HCT116 (cell line): ENCODE measurements at regions of chr17 and their contacts with region 1.

Region 1: GRCh38 chr17:72725433-72726068 is 366.9 kb downstream of the SLC39A11 start:
- DNase-seq: peak; percentile 66
- ATAC-seq: peak; percentile 83
- H3K4me3 ChIP-seq: no peak overlapping the region
- H3K27ac ChIP-seq: no peak overlapping the region
- H3K4me1 ChIP-seq: peaks cover 0 to 34% of the 10 kb centered on the region in 2 experiments; a peak in 1 of 4 replicates
- H3K27me3 ChIP-seq: no peaks in the 10 kb centered on the region
- CTCF ChIP-seq: peak; percentile 95 to 100 (median 98)
- POLR2A ChIP-seq: no peak
- RAD21 ChIP-seq: peak; percentile 98

Region 2: DNA sequence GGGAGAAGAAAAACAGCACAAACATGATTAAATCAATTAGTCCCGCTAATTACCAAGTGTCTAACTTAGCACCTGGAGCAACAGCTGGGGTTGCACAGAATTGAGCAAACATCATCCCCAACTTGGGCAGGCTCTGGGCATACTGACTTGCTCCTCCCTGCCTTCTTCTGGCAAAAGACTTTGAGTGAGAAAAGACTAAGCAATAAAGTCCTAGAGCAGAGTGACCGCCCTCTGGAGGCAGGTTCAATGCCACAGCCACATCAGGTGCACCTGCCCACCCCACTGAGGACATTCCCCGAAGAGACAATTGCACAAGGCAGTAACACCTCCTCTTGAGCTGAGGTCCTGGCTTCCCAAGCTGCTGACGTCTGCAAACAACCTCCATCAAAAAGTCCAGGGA is 246.4 kb before region 1 on chr17:
- CTCF ChIA-PET with region 1: no interaction called
- POLR2A ChIA-PET with region 1: no interaction called
- RAD21 ChIA-PET with region 1: no interaction called
- intact Hi-C with region 1: no loop called
- DNase-seq: no peak
- ATAC-seq: peak; percentile 77
- H3K4me3 ChIP-seq: no peak overlapping the region
- H3K27ac ChIP-seq: no peak overlapping the region
- H3K4me1 ChIP-seq: peaks cover 3 to 32% of the 10 kb centered on the region in 2 experiments; a peak in 3 of 4 replicates
- H3K27me3 ChIP-seq: no peaks in the 10 kb centered on the region
- CTCF ChIP-seq: peak; percentile 38 to 58 (median 47); a peak in 5 of 6 replicates
- POLR2A ChIP-seq: no peak
- RAD21 ChIP-seq: peak; percentile 69

Region 3: DNA sequence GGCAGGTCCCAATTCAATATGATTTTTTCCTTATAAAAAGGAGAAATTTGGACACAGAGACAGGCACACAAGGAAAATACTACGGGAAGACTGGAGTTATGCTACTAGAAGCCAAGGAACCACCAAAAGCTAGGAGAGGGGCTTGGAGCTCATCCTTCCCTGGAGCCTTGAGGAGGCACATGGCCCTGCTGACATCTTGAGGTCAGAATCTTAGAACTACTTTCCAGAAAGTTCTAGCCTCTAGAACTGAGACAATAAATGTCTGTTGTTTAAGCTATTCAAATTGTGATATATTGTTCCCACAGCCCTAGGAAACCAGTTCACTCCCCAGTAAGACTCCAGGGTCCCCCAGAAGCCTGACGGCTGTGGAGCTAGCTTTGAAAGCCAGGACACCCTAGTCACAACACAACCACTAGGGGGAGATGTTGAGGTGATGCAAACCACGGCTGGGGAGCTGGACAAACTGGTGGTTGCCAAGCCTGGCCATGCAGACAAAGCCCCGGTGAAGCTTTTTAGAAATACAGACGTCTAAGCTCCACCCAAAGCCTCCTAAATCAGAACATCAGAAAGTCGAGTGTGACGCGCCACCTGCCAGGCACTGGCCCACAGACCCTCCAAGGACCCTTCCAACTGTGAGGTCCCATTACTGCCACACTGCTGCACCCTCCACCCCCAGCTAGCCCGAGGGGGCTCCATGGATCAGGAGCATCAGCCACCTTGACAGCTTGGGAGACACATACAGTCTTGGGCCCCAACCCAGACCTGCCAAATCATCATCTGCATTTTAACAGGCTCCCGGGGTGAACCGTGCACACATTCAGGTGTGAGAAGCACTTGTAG is 260.6 kb after region 1 on chr17:
- CTCF ChIA-PET with region 1: interaction called, 59 read pairs
- POLR2A ChIA-PET with region 1: no interaction called
- RAD21 ChIA-PET with region 1: interaction called, 4 to 5 read pairs
- intact Hi-C with region 1: loop called (anchors 1 kb)
- DNase-seq: peak; percentile 70
- ATAC-seq: peak; percentile 74
- H3K4me3 ChIP-seq: no peak overlapping the region
- H3K27ac ChIP-seq: peak overlapping the region; percentile 77; the same call in 1 of the 2 replicates
- H3K4me1 ChIP-seq: peaks cover 31 to 38% of the 10 kb centered on the region in 2 experiments
- H3K27me3 ChIP-seq: no peaks in the 10 kb centered on the region
- CTCF ChIP-seq: peak; percentile 80 to 99 (median 99)
- POLR2A ChIP-seq: no peak
- RAD21 ChIP-seq: peak; percentile 79

Region 4: GRCh38 chr17:73192894-73193701 is 467.5 kb after region 1 on chr17 and contains the start of gene COG1:
- CTCF ChIA-PET with region 1: interaction called, 212 read pairs
- POLR2A ChIA-PET with region 1: interaction called, 12 read pairs
- RAD21 ChIA-PET with region 1: interaction called, 13 to 25 read pairs
- intact Hi-C with region 1: loop called (anchors 1 kb)
- DNase-seq: peak; percentile 76
- ATAC-seq: peak; percentile 75
- H3K4me3 ChIP-seq: peak within 1 kb of the TSS; percentile 68 to 88
- H3K27ac ChIP-seq: peak within 1 kb of the TSS; percentile 98
- H3K4me1 ChIP-seq: peaks cover 0 to 35% of the 10 kb centered on the region in 2 experiments; a peak in 3 of 4 replicates
- H3K27me3 ChIP-seq: no peaks in the 10 kb centered on the region
- CTCF ChIP-seq: 0 out of 6 replicates have a peak, but pooled peaks of 1 of the 3 experiments have one; percentile 7
- POLR2A ChIP-seq: peak; percentile 7
- RAD21 ChIP-seq: no peak
- total RNA-seq, gene COG1: 44.6 TPM

Region 5: GRCh38 chr17:73247726-73248125 is 522.2 kb after region 1 on chr17:
- CTCF ChIA-PET with region 1: interaction called, 7 read pairs
- POLR2A ChIA-PET with region 1: no interaction called
- RAD21 ChIA-PET with region 1: interaction called in 1 of 2 experiments, 4 read pairs
- intact Hi-C with region 1: loop called (anchors 2 kb)
- DNase-seq: no peak
- ATAC-seq: peak; percentile 20; the same call in 1 of the 2 replicates
- H3K4me3 ChIP-seq: no peak overlapping the region
- H3K27ac ChIP-seq: no peak overlapping the region
- H3K4me1 ChIP-seq: no peaks in the 10 kb centered on the region
- H3K27me3 ChIP-seq: no peaks in the 10 kb centered on the region
- CTCF ChIP-seq: peak in 2 of 3 experiments; percentile 32 to 39; a peak in 2 of 6 replicates
- POLR2A ChIP-seq: no peak
- RAD21 ChIP-seq: peak; percentile 53; the same call in 1 of the 2 replicates

Region 6: GRCh38 chr17:73420895-73421294 is 695.3 kb after region 1 on chr17:
- CTCF ChIA-PET with region 1: interaction called, 3 read pairs
- POLR2A ChIA-PET with region 1: no interaction called
- RAD21 ChIA-PET with region 1: no interaction called
- intact Hi-C with region 1: loop called (anchors 5 kb)
- DNase-seq: peak; percentile 77
- ATAC-seq: peak; percentile 98
- H3K4me3 ChIP-seq: no peak overlapping the region
- H3K27ac ChIP-seq: no peak overlapping the region
- H3K4me1 ChIP-seq: peaks cover 6 to 15% of the 10 kb centered on the region in 2 experiments; a peak in 3 of 4 replicates
- H3K27me3 ChIP-seq: no peaks in the 10 kb centered on the region
- CTCF ChIP-seq: peak; percentile 28 to 80 (median 68); a peak in 5 of 6 replicates
- POLR2A ChIP-seq: no peak
- RAD21 ChIP-seq: peak; percentile 64